ENCODE measurements at regions of chr12 and their contacts with region 1.

Region 1: DNA sequence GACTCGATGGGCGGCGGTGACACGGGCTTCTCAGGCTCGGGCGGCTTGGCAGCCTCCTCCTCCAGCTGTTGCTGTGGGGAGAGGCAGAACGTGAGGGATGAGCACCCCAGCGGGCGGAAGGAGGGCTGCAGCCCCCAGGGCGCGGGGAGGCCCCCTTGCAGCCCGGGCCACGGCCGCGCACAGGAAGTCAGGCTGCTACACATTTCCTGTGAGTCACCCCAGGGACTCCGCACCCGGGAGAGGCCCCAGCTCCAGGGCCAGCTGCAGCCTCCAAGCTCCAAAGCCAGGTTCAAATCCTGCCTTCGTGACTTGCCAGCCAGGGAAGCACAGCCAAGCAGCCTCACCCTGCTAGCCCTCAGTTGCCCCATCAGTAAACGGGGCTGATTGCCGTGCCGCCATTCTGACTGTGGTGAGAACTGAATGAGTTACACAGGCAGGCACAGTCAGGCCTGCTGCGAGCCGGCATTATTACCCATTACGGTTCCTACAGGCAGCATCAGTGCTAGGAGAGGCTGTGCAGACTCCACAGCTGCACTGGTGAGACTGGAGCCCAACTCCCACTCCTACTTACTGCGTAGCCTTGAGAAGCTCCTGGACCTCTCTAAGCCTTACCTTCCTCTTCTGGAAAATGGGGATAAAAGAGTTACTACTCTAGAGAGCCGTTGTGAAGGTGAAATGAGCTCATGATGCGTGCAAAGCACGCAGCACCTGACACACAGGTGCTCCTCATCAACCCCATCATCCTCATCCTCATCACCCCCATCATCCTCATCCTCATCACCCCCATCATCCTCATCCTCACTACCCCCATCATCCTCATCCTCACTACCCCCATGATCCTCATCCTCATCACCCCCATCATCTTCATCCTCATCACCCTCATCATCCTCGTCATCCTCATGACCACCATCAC is 100.9 kb downstream of the NCOR2 start:
- DNase-seq: peak; percentile 93
- H3K4me3 Mint-ChIP-seq: peak overlapping the region; percentile 21
- H3K27ac Mint-ChIP-seq: peak overlapping the region; percentile 56
- H3K4me1 Mint-ChIP-seq: peaks cover 27% of the 10 kb centered on the region
- H3K27me3 Mint-ChIP-seq: no peaks in the 10 kb centered on the region

Region 2: DNA sequence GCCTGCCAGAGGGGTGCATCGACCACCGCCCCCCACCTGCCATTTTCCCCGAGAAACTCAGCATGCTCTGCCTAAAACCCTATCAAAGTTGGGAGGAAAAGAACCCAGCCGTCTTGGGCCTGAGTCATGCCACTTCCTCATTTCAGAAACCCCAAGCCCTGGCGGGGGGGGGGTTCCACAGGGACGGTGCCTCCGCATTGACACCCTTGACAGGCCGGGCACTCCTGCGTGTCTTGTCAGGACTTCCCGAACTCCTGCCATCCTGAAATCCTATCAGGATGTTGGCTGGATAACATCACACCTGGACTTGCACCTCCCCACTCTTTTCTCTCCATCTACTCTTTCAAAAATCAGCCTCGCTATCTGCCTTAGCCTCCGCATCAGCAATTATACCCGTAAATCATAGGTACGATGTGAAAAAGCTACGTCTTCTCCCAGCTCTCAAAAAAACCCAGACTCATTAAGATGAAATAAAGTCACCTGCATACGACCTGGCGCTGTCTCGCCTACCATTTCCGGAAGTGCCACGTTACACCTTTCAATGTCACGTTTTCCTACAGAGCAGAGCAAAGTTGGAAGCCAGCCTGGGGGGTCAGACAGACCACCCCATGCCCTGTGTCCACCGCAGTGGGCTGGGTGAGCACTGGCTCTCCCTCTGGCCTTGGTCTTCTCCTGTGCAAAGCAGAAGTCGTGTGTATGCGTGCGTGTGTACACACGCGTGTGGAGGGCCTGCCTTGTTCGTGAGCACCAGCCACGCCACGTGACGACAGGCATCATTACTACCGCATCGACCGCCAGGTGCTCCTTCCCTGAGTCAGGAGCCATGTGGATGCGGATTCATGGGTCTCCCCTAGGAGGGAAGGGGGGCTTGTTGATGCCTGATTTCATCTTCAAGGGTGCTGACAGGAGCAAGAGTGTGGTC is 74.9 kb before region 1 on chr12:
- CTCF ChIA-PET with region 1: no interaction called
- intact Hi-C with region 1: loop called (anchors 1 kb)
- DNase-seq: peak; percentile 77
- H3K4me3 Mint-ChIP-seq: peak overlapping the region; percentile 16
- H3K27ac Mint-ChIP-seq: peak overlapping the region; percentile 88
- H3K4me1 Mint-ChIP-seq: peaks cover 34% of the 10 kb centered on the region
- H3K27me3 Mint-ChIP-seq: no peaks in the 10 kb centered on the region

Region 3: DNA sequence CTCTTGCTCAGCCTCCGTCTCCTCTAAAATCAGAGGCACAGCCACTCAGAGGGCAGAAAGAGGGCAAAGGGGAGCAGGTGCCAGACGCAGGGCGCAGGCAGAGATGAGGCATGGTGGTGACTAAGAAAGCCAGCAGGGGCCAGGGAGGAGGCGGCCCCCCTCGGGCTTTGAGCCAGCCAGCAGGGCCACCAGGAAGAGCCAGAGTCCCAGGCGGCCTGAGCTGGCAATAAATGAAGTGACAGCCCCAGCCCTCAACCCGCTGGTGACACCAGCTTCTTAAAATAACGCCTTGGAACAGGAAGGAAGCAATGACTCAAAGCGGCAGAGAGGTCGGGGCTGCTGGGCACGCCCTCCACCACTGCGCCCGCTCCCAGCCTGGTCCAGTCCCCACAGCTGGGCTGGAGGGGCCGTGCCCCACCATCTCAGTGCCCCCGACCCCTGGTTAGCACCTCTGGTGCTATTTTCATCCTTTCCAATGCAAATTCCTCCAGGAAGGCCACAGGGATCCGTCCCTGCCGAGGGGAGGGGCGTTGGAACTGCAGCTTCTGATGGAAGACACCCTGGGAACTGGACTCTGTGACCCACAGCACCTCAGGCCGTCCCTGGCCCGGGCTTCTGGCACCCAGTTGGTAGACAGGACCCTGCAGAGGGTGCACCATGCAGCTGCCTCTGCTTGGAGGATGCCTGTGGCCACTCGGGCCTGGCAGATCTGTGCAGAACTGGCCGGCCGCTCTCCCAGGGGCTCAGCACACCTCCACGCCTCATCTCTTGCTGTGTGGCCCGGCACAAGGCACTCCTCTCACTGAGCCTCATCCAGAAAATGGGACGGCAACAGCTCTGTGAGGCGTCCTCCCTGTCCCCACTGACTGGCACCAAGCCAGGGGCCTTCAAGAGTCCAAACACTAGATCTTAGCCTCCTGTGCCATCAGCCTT is 12.8 kb before region 1 on chr12:
- CTCF ChIA-PET with region 1: interaction called, 8 read pairs
- intact Hi-C with region 1: loop called (anchors 1 kb)
- DNase-seq: peak; percentile 93
- H3K4me3 Mint-ChIP-seq: no peak overlapping the region
- H3K27ac Mint-ChIP-seq: no peak overlapping the region
- H3K4me1 Mint-ChIP-seq: peaks cover 57% of the 10 kb centered on the region
- H3K27me3 Mint-ChIP-seq: no peaks in the 10 kb centered on the region

Region 4: DNA sequence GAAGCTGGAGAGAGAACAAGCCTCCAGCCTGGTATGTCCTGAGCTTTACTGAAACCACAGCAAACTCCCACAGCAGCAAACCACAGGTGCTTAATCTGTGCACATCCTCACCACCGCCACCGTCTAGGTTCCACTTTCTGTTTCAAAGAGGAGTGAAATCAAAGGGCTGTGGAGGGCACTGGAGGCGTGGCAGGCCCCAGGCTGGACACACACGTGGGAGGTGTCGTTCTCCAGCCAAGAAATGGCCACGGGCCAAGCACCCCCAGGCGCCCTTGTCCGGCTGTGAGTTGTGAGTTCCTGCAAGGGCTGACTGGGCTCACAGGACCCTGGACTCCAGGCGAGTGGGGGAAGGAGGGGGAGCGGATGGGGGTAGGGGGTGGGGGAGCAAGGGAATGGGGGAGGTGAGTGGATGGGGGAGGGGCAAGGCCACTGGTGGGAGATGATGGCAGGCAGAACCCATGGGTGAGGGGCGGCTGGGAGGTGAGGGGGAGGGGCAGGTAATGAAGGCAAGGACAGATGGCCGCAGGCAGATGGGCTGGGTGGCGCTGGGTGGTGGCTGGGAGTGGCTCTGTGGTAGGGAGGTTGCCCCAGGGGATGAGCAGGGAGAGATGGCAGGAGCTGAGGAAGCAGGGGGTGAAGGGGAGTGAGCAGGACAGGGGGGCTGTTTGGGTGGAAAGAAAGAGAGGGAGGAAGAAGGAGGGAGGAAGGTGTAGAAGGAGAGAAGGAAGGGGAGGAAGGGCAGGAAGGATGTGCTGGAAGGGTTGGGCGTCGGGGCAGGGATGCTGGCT is 14.2 kb after region 1 on chr12:
- CTCF ChIA-PET with region 1: interaction called, 3 read pairs
- intact Hi-C with region 1: loop called (anchors 1 kb)
- DNase-seq: peak; percentile 61
- H3K4me3 Mint-ChIP-seq: no peak overlapping the region
- H3K27ac Mint-ChIP-seq: no peak overlapping the region
- H3K4me1 Mint-ChIP-seq: peaks cover 35% of the 10 kb centered on the region
- H3K27me3 Mint-ChIP-seq: no peaks in the 10 kb centered on the region

Region 5: GRCh38 chr12:124493809-124494750 is 27.6 kb after region 1 on chr12:
- CTCF ChIA-PET with region 1: no interaction called
- intact Hi-C with region 1: loop called (anchors 2 kb)
- DNase-seq: peak; percentile 78
- H3K4me3 Mint-ChIP-seq: no peak overlapping the region
- H3K27ac Mint-ChIP-seq: peak overlapping the region; percentile 82
- H3K4me1 Mint-ChIP-seq: peaks cover 40% of the 10 kb centered on the region
- H3K27me3 Mint-ChIP-seq: no peaks in the 10 kb centered on the region

Region 6: GRCh38 chr12:124636138-124636978 is 169.9 kb after region 1 on chr12:
- CTCF ChIA-PET with region 1: no interaction called
- intact Hi-C with region 1: loop called (anchors 1 kb)
- DNase-seq: peak; percentile 89
- H3K4me3 Mint-ChIP-seq: no peak overlapping the region
- H3K27ac Mint-ChIP-seq: no peak overlapping the region
- H3K4me1 Mint-ChIP-seq: peaks cover 20% of the 10 kb centered on the region
- H3K27me3 Mint-ChIP-seq: no peaks in the 10 kb centered on the region

Region 7: GRCh38 chr12:124917135-124917840 is 450.8 kb after region 1 on chr12:
- CTCF ChIA-PET with region 1: no interaction called
- intact Hi-C with region 1: loop called (anchors 5 kb)
- DNase-seq: peak; percentile 98
- H3K4me3 Mint-ChIP-seq: peak overlapping the region; percentile 73
- H3K27ac Mint-ChIP-seq: peak overlapping the region; percentile 100
- H3K4me1 Mint-ChIP-seq: peaks cover 83% of the 10 kb centered on the region
- H3K27me3 Mint-ChIP-seq: peaks cover 6% of the 10 kb centered on the region

Measured in activated naive CD4-positive, alpha-beta T cell treated with anti-CD3 and anti-CD28 coated beads for 36 hours (primary cell).